Activated CD4-positive, alpha-beta memory T cell treated with anti-CD3 and anti-CD28 coated beads for 36 hours (primary cell): ENCODE measurements at regions of chr5 and their contacts with region 1.

Region 1: GRCh38 chr5:40333459-40334244 is 346.1 kb upstream of the PTGER4 start:
- DNase-seq: peak; percentile 56
- H3K4me3 Mint-ChIP-seq: no peak overlapping the region
- H3K27ac Mint-ChIP-seq: peak overlapping the region; percentile 33
- H3K4me1 Mint-ChIP-seq: peaks cover 50% of the 10 kb centered on the region
- H3K27me3 Mint-ChIP-seq: no peaks in the 10 kb centered on the region

Region 2: DNA sequence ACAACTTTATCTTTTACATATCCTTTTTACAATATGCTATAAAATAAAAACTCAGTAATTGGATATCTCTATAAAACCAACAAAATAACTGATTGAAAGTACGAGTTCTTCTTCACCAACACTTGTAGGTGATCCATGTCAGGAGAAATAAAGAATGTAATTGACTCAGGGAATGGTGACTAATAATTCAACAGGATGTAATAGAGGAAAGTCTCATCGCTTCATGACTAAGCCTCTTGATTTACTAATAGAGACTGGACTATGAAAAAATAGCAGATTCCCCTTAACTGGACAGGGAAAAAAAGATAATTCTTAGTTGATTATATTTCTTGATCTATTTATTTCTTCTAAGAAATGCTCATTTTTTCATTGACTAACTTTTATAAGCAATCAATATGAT is 161.7 kb before region 1 on chr5:
- CTCF ChIA-PET with region 1: no interaction called
- POLR2A ChIA-PET with region 1: no interaction called
- intact Hi-C with region 1: loop called (anchors 1 kb)
- DNase-seq: no peak
- H3K4me3 Mint-ChIP-seq: no peak overlapping the region
- H3K27ac Mint-ChIP-seq: no peak overlapping the region
- H3K4me1 Mint-ChIP-seq: peaks cover 16% of the 10 kb centered on the region
- H3K27me3 Mint-ChIP-seq: no peaks in the 10 kb centered on the region

Region 3: GRCh38 chr5:40240111-40240510 is 93.5 kb before region 1 on chr5:
- CTCF ChIA-PET with region 1: no interaction called
- POLR2A ChIA-PET with region 1: no interaction called
- intact Hi-C with region 1: loop called (anchors 1 kb)
- DNase-seq: peak; percentile 84
- H3K4me3 Mint-ChIP-seq: peak overlapping the region; percentile 21
- H3K27ac Mint-ChIP-seq: peak overlapping the region; percentile 92
- H3K4me1 Mint-ChIP-seq: peaks cover 42% of the 10 kb centered on the region
- H3K27me3 Mint-ChIP-seq: no peaks in the 10 kb centered on the region

Region 4: GRCh38 chr5:40307920-40308319 is 25.7 kb before region 1 on chr5:
- CTCF ChIA-PET with region 1: no interaction called
- POLR2A ChIA-PET with region 1: no interaction called
- intact Hi-C with region 1: loop called (anchors 2 kb)
- DNase-seq: no peak
- H3K4me3 Mint-ChIP-seq: no peak overlapping the region
- H3K27ac Mint-ChIP-seq: no peak overlapping the region
- H3K4me1 Mint-ChIP-seq: peaks cover 9% of the 10 kb centered on the region
- H3K27me3 Mint-ChIP-seq: no peaks in the 10 kb centered on the region